ENCODE measurements at regions of chr4 and their contacts with region 1.

Region 1: GRCh38 chr4:124111922-124112321 is 600.6 kb downstream of the ANKRD50 start:
- DNase-seq: peak; percentile 13
- H3K4me3 Mint-ChIP-seq: no peak overlapping the region
- H3K27ac Mint-ChIP-seq: no peak overlapping the region
- H3K4me1 Mint-ChIP-seq: no peaks in the 10 kb centered on the region
- H3K27me3 Mint-ChIP-seq: no peaks in the 10 kb centered on the region
- CTCF ChIP-seq: no peak

Region 2: DNA sequence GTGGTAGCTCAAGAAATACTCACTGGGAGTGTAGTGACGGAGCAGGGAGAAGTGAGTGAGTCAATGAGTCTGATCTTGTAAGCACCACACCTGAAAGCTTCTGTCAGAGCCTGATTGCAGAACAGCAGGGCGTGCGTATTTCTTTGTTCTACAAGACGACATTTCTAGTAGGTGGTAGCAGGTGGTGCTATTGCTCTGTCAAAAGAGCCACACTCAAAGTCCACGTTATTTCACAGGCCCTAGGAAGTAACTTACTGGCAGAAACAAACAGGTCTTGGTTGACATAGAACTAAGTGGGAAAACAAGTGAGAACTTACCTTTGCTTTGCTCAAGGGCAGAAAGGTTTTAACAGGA is 761.8 kb before region 1 on chr4:
- CTCF ChIA-PET with region 1: no interaction called
- intact Hi-C with region 1: loop called (anchors 2 kb)
- DNase-seq: peak; percentile 19
- H3K4me3 Mint-ChIP-seq: no peak overlapping the region
- H3K27ac Mint-ChIP-seq: no peak overlapping the region
- H3K4me1 Mint-ChIP-seq: peaks cover 8% of the 10 kb centered on the region
- H3K27me3 Mint-ChIP-seq: no peaks in the 10 kb centered on the region
- CTCF ChIP-seq: no peak

Region 3: GRCh38 chr4:123555233-123555806 is 556.6 kb before region 1 on chr4:
- CTCF ChIA-PET with region 1: no interaction called
- intact Hi-C with region 1: loop called (anchors 5 kb)
- DNase-seq: peak; percentile 88
- H3K4me3 Mint-ChIP-seq: peak overlapping the region; percentile 55
- H3K27ac Mint-ChIP-seq: peak overlapping the region; percentile 90
- H3K4me1 Mint-ChIP-seq: peaks cover 67% of the 10 kb centered on the region
- H3K27me3 Mint-ChIP-seq: no peaks in the 10 kb centered on the region
- CTCF ChIP-seq: no peak

Region 4: GRCh38 chr4:124262211-124263179 is 150.6 kb after region 1 on chr4:
- CTCF ChIA-PET with region 1: no interaction called
- intact Hi-C with region 1: loop called (anchors 2 kb)
- DNase-seq: peak; percentile 65
- H3K4me3 Mint-ChIP-seq: no peak overlapping the region
- H3K27ac Mint-ChIP-seq: no peak overlapping the region
- H3K4me1 Mint-ChIP-seq: peaks cover 10% of the 10 kb centered on the region
- H3K27me3 Mint-ChIP-seq: no peaks in the 10 kb centered on the region
- CTCF ChIP-seq: peak; percentile 56